Activated CD4-positive, alpha-beta T cell treated with anti-CD3 and anti-CD28 coated beads, Interleukin-2, amount 10 ng/mL, durations not matched to agents 24 days and 14 days (primary cell): ENCODE measurements at regions of chr17 and their contacts with region 1.

Region 1: GRCh38 chr17:21252796-21253645 is at the start of gene NATD1:
- DNase-seq: peak; percentile 92
- H3K4me3 Mint-ChIP-seq: peak within 1 kb of the TSS; percentile 83
- H3K27ac Mint-ChIP-seq: peak within 1 kb of the TSS; percentile 65
- H3K4me1 Mint-ChIP-seq: peaks cover 11% of the 10 kb centered on the region
- H3K27me3 Mint-ChIP-seq: peaks cover 22% of the 10 kb centered on the region
- total RNA-seq, gene NATD1: 1.1 TPM in 2 replicates

Region 2: DNA sequence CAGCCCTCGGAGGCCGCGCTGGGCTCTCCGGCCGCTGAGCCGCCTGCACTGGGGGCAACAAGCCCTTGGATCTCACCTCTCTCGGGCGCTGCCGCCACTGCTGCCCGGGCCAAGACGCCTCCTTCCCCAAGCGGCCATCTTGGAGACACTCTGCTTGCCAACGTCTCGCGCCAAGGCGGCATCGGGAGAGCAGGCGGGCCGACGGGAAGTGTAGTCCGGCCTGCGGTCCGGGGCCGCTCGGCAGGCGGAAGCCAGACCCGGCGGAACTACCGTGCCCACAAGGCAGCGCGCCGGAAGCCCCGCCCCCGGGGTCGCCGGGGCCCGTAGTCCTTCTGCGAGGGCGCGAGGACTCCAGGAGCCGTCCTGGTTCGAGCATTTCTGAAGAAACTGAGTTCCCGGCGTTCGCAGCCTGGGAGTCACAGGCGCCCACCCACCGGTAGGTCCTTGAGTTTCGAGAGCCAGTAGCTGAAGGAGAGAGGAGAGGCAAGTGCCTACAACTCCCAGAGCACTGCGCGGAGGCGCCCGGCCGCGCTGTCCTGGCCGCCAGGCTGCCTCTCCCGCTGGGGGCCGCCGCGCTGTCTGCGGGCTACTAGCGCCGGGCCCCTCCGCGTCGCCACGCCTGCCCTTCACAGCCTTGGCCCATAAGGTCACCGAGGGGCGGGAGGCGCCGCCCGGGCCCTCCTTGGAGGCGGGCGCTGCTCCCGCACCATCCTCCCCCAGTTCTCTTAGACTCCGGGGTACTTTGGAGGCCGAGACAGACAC is 38.8 kb before region 1 on chr17 and contains the start of gene TMEM11:
- intact Hi-C with region 1: loop called (anchors 2 kb)
- DNase-seq: peak; percentile 99
- H3K4me3 Mint-ChIP-seq: peak within 1 kb of the TSS; percentile 90
- H3K27ac Mint-ChIP-seq: peak within 1 kb of the TSS; percentile 95
- H3K4me1 Mint-ChIP-seq: peaks cover 48% of the 10 kb centered on the region
- H3K27me3 Mint-ChIP-seq: no peaks in the 10 kb centered on the region
- total RNA-seq, gene TMEM11: 33.5 and 34.7 TPM in 2 replicates

Region 3: GRCh38 chr17:21233581-21234347 is 19.3 kb before region 1 on chr17:
- intact Hi-C with region 1: no loop called
- DNase-seq: no peak
- H3K4me3 Mint-ChIP-seq: no peak overlapping the region
- H3K27ac Mint-ChIP-seq: no peak overlapping the region
- H3K4me1 Mint-ChIP-seq: peaks cover 3% of the 10 kb centered on the region
- H3K27me3 Mint-ChIP-seq: no peaks in the 10 kb centered on the region

Region 4: GRCh38 chr17:21275579-21276263 is 22.7 kb after region 1 on chr17:
- intact Hi-C with region 1: loop called (anchors 2 kb)
- DNase-seq: peak; percentile 99
- H3K4me3 Mint-ChIP-seq: peak overlapping the region; percentile 74
- H3K27ac Mint-ChIP-seq: peak overlapping the region; percentile 85
- H3K4me1 Mint-ChIP-seq: peaks cover 33% of the 10 kb centered on the region
- H3K27me3 Mint-ChIP-seq: no peaks in the 10 kb centered on the region